ENCODE measurements at regions of chr2 and their contacts with region 1.

Region 1: DNA sequence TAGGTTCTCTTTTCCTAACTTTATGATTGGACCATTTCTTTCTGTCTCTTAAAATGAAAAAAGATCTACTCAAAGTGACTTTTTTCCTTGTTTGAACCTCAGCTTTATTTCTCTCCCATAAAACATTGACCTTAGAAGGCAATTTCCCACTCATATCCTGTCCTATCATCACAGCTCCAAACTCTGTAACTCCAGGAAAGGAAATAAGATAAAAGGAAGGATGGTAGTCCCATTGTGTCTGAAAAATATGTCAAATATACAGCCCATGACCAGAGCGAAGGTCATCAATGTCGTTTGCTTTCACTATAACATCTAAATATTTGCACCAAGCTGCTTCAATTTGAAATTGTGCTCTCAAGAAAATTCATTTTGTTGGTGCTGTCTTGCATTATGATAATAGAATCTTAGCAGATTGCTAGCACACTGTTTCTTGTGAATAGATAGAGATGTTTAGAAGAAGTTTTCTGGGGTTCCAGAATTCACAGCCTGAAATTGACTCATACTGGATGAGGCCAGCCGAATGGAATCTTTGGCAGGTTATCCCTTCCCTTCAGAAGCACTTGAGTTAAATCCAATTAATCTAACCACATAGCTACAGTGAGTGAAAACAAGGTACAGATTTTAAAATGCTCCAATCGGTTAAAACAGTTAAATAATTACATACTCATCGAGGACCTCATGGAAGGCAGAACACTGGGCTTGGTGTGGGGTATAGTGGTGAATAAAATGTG is 95.1 kb downstream of the CRIM1 start:
- DNase-seq: no peak
- H3K4me3 ChIP-seq: peak overlapping the region in 1 of 2 donors; percentile 16
- H3K27ac ChIP-seq: peak overlapping the region; percentile 77 to 94
- H3K4me1 ChIP-seq: peaks cover 46 to 88% of the 10 kb centered on the region in 2 donors
- H3K27me3 ChIP-seq: no peaks in the 10 kb centered on the region
- CTCF ChIP-seq: no peak

Region 2: DNA sequence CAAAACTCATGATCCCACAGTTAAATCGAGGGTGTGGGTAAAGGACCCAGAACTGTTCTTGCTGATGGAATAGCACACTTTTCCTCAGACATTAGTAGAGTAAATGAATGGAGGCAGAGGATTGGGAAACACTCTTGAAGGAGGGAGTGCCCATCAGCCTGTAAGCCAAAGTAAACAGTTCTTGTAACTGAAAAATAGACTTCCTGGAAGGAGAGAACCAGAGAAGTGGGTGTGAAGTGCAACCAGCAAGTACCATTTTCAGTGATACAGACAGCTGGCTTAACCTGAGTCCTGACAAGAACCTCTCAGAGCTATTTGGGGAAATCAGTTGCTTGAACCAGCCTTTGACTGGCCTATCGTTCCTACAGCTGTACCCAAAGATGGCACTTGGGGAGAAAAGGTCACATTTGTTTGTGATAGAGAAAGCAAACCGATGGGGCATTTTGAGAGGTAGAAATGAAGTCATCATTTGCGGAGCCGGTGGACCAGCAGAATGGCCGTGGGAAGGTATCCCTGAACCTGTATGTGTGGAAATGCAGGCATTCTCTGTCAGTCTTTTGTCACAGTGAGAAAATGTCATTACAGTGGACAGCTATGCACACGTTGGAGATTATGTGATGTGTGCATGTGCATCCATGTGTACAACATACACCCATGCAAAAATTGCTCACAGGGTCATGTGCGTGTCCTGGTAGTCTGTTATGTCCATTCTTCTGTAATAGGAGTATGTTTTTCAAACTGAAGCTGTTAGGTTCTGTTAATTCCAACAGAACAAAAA is 77.3 kb before region 1 on chr2:
- intact Hi-C with region 1: loop called (anchors 2 kb)
- DNase-seq: no peak
- H3K4me3 ChIP-seq: peak overlapping the region in 1 of 2 donors; percentile 3
- H3K27ac ChIP-seq: peak overlapping the region; percentile 47 to 68
- H3K4me1 ChIP-seq: peaks cover 22 to 78% of the 10 kb centered on the region in 2 donors
- H3K27me3 ChIP-seq: no peaks in the 10 kb centered on the region
- CTCF ChIP-seq: no peak

Region 3: GRCh38 chr2:36486546-36487044 is 36.0 kb after region 1 on chr2:
- intact Hi-C with region 1: loop called (anchors 5 kb)
- DNase-seq: no peak
- H3K4me3 ChIP-seq: no peak overlapping the region
- H3K27ac ChIP-seq: peak overlapping the region; percentile 81 to 88
- H3K4me1 ChIP-seq: peaks cover 15 to 66% of the 10 kb centered on the region in 2 donors
- H3K27me3 ChIP-seq: no peaks in the 10 kb centered on the region
- CTCF ChIP-seq: no peak

Region 4: DNA sequence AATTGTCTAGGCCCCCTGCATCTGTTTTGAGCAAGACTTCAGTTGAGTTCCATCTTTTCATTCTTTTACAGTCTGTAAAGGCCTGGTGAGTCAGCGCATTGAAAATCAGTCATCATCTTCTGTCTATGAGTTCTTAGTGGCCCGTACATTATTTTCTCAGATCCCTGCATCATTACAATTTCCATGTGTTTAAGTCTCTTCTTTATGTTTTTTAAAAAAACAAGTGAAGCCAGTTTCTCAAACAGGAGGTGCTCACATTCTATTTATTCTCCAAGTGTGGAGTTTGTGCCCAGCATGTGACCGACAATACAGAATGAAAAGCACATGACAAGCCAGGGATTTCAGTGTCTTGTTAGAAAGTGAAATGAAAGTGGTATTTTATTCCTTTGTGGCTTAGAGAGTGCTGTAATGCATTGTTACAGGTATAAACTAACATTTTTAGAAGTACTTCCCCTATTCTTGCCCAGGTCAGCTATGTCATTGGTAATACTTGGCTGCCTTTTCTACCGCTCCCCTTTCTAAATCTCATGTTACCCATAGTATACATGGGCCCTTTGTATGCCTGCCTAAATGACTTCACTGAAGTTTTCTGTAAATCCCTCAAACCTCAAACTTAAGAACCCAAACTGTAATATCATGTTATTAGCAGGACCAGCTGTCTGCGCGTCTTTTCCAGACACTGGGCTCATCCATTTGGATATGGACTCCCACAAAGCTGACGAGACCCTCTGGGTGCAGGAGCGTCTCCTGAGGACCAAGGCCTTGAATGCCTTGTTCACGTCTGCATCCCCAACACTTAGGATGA is 79.7 kb after region 1 on chr2:
- intact Hi-C with region 1: no loop called
- DNase-seq: no peak
- H3K4me3 ChIP-seq: no peak overlapping the region
- H3K27ac ChIP-seq: peak overlapping the region; percentile 71 to 72
- H3K4me1 ChIP-seq: peaks cover 0 to 18% of the 10 kb centered on the region in 2 donors
- H3K27me3 ChIP-seq: no peaks in the 10 kb centered on the region
- CTCF ChIP-seq: no peak

Region 5: DNA sequence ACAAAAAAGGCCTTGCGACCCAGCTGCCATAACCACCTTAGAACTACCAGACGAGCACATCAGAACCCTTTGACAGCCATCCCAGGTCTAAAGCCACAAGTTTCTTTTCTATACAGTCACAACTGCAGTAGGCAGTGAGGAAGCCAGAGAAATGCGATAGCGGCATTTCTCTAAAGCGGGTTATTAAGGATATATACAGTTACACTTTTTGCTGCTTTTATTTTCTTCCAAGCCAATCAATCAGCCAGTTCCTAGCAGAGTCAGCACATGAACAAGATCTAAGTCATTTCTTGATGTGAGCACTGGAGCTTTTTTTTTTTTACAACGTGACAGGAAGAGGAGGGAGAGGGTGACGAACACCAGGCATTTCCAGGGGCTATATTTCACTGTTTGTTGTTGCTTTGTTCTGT is 98.5 kb after region 1 on chr2:
- intact Hi-C with region 1: no loop called
- DNase-seq: no peak
- H3K4me3 ChIP-seq: no peak overlapping the region
- H3K27ac ChIP-seq: peak overlapping the region; percentile 37 to 62
- H3K4me1 ChIP-seq: no peaks in the 10 kb centered on the region
- H3K27me3 ChIP-seq: no peaks in the 10 kb centered on the region
- CTCF ChIP-seq: no peak